ENCODE measurements at regions of chr19 and their contacts with region 1.

Region 1: DNA sequence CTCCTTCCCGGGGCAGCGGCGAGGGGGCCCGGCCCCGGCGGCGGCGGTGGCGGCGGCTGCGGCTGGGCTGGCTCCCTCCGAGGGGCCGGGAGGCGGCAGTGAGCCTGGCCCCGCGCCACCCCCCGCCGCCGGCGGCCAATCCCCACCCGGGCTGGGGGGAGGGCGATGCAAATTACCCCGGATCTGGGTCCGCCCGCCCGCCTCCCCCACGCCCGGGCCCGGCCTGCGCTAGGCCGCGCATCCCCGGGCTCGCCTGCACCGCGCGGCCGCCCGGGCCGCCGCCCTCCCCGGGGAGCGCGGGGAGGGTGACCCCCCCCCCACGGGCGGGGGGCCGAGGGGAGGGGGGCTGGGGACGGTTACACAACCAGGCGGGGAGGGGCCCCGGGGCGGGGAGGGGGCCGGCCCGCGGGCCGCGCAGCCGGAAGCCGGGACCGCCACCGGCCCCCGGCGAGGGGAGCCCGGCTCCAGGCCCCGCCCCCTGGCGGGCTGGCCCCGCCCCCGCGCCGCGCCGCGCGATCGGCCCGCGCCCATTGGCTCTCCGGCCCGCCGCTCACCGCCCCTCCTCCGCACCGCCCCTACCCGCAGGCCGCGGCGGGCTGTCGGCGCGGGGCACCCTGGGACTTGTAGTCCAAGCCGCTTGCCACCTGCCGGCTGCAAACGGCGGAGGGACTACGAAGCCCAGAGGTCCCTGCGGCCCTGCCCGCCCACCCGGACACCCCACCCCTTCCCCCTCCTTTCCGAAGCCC is 1.1 kb downstream of the ZBTB7A start:
- DNase-seq: peak; percentile 98
- ATAC-seq: peak; percentile 91
- H3K4me3 ChIP-seq: peak overlapping the region; percentile 97 to 98
- H3K27ac ChIP-seq: peak overlapping the region in 1 of 2 donors; percentile 69
- H3K4me1 ChIP-seq: no peaks in the 10 kb centered on the region
- H3K27me3 ChIP-seq: no peaks in the 10 kb centered on the region

Region 2: GRCh38 chr19:4019578-4019977 is 46.0 kb before region 1 on chr19:
- intact Hi-C with region 1: no loop called
- DNase-seq: no peak
- ATAC-seq: no peak
- H3K4me3 ChIP-seq: no peak overlapping the region
- H3K27ac ChIP-seq: no peak overlapping the region
- H3K4me1 ChIP-seq: no peaks in the 10 kb centered on the region
- H3K27me3 ChIP-seq: no peaks in the 10 kb centered on the region

Region 3: DNA sequence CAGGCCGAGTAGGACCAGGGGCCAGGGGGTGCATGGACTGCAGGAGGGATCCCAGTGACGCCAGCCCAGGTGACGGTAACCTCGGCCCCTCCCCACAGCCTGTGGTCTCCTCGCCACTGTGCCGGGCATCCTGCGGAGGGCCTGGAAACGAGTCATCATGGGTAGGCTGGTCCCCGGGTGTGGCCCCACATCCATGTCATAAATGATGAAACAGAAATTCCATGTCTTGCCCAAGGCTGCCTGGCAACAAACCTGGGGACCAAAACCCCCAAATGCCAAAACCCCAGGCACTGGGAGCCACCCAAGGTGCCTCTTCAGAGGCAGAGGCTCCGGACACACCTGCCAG is 37.4 kb after region 1 on chr19:
- intact Hi-C with region 1: no loop called
- DNase-seq: peak in 1 of 2 donors; percentile 48
- ATAC-seq: no peak
- H3K4me3 ChIP-seq: no peak overlapping the region
- H3K27ac ChIP-seq: no peak overlapping the region
- H3K4me1 ChIP-seq: no peaks in the 10 kb centered on the region
- H3K27me3 ChIP-seq: no peaks in the 10 kb centered on the region

Region 4: GRCh38 chr19:4123615-4124568 is 58.3 kb after region 1 on chr19 and contains the start of gene MAP2K2:
- intact Hi-C with region 1: loop called in 1 of 2 experiments (anchors 5 kb)
- DNase-seq: peak; percentile 97 to 99
- ATAC-seq: peak; percentile 97
- H3K4me3 ChIP-seq: peak within 1 kb of the TSS; percentile 64 to 69
- H3K27ac ChIP-seq: no peak within 1 kb of the TSS
- H3K4me1 ChIP-seq: no peaks in the 10 kb centered on the region
- H3K27me3 ChIP-seq: no peaks in the 10 kb centered on the region
- total RNA-seq, gene MAP2K2: 80.8 to 97.8 TPM